ENCODE measurements at regions of chr12 and their contacts with region 1.

Region 1: GRCh38 chr12:120649442-120650232 is 9.2 kb downstream of the CABP1 start:
- DNase-seq: no peak
- H3K4me3 ChIP-seq: peak overlapping the region; percentile 40
- CTCF ChIP-seq: no peak

Region 2: DNA sequence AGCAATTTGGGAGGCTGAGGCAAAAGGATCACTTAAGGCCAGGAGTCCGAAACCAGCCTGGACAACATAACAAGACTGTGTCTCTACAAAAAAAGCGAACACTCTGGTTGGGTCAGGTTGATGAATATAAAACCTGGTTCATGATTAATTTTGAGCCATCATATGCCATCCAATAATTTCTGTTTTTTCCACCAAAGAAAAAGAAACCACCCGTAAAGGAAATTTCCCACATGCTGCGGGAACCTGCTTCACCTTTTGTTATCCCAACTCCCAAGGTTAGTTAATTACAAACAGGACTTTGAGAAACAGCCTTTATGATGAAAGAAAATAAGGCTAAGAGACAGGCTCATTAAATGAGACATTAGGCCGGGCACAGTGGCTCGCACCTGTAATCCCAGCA is 684.7 kb before region 1 on chr12:
- CTCF ChIA-PET with region 1: no interaction called
- POLR2A ChIA-PET with region 1: no interaction called
- DNase-seq: no peak
- H3K4me3 ChIP-seq: no peak overlapping the region
- CTCF ChIP-seq: no peak

Region 3: GRCh38 chr12:120580787-120581723 is 68.6 kb before region 1 on chr12 and contains the start of gene POP5:
- CTCF ChIA-PET with region 1: interaction called, 101 read pairs
- POLR2A ChIA-PET with region 1: no interaction called
- DNase-seq: peak; percentile 84
- H3K4me3 ChIP-seq: peak within 1 kb of the TSS; percentile 98
- CTCF ChIP-seq: no peak

Region 4: DNA sequence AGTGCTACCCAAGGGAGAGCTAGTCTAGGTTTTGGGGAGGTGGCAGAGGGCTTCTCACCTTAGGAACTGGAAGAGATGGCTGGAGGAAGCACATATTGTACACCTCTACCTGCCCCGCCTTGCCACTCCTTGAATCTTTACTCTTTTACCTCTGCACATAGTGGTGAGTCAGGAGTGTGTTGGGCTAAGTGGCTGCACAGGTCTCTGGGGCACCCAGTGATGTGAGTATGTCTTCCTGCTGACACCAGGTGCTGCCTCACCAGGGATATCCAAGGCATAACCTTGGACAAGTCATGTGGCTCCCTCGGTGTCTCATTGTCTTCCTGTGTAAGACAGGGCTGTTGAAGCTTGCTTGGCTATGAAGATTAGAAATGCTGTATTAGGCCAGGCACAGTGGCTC is 29.0 kb before region 1 on chr12:
- CTCF ChIA-PET with region 1: interaction called, 82 read pairs
- POLR2A ChIA-PET with region 1: no interaction called
- DNase-seq: no peak
- H3K4me3 ChIP-seq: no peak overlapping the region
- CTCF ChIP-seq: no peak

Region 5: GRCh38 chr12:120662879-120663278 is 13.2 kb after region 1 on chr12:
- CTCF ChIA-PET with region 1: interaction called, 170 read pairs
- POLR2A ChIA-PET with region 1: no interaction called
- DNase-seq: no peak
- H3K4me3 ChIP-seq: no peak overlapping the region
- CTCF ChIP-seq: no peak

Region 6: DNA sequence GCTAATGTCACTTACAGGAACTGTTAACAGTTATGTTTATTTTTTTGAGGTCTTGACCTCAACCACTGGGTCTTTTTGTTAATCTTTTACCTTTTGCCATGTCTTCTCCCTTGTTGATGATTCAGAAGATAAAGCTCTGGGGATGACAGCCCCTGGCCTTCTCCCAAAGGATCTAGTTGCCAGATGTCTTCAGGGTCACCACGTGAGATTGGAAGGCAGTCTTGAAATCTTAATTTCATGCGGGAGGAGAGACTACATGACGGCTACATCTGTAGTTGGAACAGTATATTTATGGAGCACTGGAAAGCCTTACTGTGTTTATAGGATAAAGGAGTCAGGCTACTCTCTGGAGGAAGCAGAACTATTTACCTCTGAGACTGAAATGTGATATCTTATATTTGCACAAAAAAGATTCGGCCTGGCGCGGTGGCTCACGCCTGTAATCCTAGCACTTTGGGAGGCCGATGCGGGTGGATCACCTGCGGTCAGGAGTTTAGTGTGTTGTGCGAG is 42.9 kb after region 1 on chr12:
- CTCF ChIA-PET with region 1: interaction called, 26 read pairs
- POLR2A ChIA-PET with region 1: interaction called, 4 read pairs
- DNase-seq: no peak
- H3K4me3 ChIP-seq: no peak overlapping the region
- CTCF ChIP-seq: no peak

Region 7: DNA sequence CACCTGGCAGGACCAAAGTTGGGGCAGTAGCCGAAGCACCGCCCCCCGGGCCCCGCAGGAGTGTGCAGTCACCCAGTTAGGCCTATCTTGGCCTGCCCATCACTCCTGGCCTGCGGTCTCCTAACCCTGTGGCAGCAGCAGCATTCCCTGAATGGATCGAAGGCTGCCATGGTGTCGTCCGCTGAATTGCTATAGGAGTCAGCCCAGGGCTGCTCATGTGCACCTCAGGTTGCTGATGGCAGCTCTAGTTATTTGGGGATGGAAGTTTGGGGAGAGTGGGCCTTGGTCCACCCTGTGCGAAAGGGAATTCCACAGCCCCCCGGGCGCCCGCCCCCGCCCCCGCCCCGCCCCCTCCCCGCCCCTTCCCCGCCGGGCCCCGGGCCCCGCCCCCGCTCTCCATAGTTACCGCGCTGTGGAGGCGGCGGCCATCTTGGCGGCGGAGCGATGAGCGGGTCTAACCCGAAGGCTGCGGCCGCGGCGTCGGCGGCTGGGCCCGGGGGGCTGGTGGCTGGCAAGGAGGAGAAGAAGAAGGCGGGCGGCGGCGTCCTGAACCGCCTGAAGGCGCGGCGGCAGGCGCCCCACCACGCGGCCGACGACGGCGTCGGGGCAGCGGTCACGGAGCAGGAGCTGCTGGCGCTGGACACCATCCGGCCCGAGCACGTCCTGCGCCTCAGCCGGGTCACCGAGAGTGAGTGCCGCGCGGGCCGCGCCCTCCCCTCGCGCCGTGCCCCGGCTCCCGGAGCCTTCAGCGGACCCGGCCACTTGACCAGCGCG is 60.6 kb after region 1 on chr12 and contains the start of gene UNC119B:
- CTCF ChIA-PET with region 1: interaction called, 48 read pairs
- POLR2A ChIA-PET with region 1: no interaction called
- DNase-seq: no peak
- H3K4me3 ChIP-seq: peak within 1 kb of the TSS; percentile 75
- CTCF ChIP-seq: no peak

Region 8: GRCh38 chr12:121009741-121010140 is 360.1 kb after region 1 on chr12:
- CTCF ChIA-PET with region 1: interaction called, 19 read pairs
- POLR2A ChIA-PET with region 1: no interaction called
- DNase-seq: no peak
- H3K4me3 ChIP-seq: no peak overlapping the region
- CTCF ChIP-seq: peak; percentile 57

Measured in AG04449 (cell line).